AG04450 (cell line): ENCODE measurements at regions of chr4 and their contacts with region 1.

Region 1: GRCh38 chr4:80221161-80221560 is 23.9 kb downstream of the PRDM8 start:
- DNase-seq: no peak
- H3K4me3 ChIP-seq: no peak overlapping the region
- H3K27ac ChIP-seq: no peak overlapping the region
- H3K27me3 ChIP-seq: no peaks in the 10 kb centered on the region
- CTCF ChIP-seq: peak; percentile 56

Region 2: GRCh38 chr4:78951862-78952472 is 1269.2 kb before region 1 on chr4:
- CTCF ChIA-PET with region 1: interaction called, 18 read pairs
- POLR2A ChIA-PET with region 1: no interaction called
- DNase-seq: no peak
- H3K4me3 ChIP-seq: no peak overlapping the region
- H3K27ac ChIP-seq: no peak overlapping the region
- H3K27me3 ChIP-seq: no peaks in the 10 kb centered on the region
- CTCF ChIP-seq: peak; percentile 78

Region 3: DNA sequence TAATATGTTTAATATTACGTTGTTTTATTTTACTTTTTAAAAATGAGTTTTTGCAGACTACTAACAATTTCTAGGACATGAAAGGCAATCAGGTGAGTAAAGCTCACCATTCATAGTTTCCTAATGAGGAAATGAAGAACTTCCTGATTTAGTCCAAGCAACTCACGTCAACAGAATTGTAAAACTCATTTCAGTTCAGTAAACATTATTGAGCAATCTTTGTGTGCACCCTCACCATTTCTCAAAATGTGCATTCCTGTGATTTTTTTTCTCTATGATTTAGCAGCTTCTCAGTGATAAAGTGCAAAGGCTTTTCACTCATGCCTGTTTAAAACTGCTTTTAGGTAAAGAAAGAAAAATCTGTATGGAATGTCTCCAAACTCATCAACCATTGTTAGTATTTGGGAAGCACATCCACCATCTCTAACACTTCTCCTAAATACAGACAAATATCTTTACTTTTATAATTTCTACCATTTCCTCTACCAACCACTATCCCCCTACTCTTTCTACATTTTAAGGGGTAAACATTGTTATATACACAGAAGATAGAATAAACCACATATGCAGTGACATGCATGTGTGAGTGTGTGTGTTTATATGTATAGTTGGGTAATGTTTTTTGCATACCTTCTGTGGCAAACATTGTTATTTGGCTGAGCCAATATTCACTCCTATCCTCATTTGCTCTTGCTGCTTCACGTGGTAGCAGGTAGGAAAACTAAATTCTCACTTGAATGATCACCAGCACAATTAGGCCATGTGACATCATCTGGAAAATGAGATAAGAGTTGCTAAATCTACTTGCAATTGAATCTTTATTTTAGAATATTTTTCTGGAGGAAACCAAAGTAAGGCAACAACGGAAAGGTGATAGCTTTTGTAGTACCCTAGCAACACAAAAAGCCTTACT is 78.5 kb before region 1 on chr4:
- CTCF ChIA-PET with region 1: no interaction called
- POLR2A ChIA-PET with region 1: no interaction called
- DNase-seq: no peak
- H3K4me3 ChIP-seq: no peak overlapping the region
- H3K27ac ChIP-seq: no peak overlapping the region
- H3K27me3 ChIP-seq: no peaks in the 10 kb centered on the region
- CTCF ChIP-seq: no peak

Region 4: DNA sequence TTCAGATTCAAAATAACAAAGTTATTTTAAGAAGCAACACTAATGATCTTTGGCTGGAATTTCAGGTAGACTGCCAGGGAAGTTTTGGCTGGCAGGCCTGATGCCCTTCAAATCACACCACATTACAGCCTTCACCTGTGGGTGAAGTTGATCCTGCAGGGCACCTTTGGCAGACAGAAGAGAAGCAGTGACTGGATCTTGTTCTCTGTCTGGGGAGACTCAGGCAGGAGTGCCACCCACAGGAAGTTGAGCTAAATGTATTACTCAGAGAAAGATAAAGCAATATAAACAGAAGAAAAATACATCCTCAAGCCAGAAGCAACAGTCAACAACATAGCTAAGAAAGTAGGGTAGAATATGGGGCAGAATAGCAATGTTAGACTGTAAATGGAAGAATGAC is 101.6 kb after region 1 on chr4:
- CTCF ChIA-PET with region 1: interaction called, 69 read pairs
- POLR2A ChIA-PET with region 1: no interaction called
- DNase-seq: no peak
- H3K4me3 ChIP-seq: no peak overlapping the region
- H3K27ac ChIP-seq: no peak overlapping the region
- H3K27me3 ChIP-seq: no peaks in the 10 kb centered on the region
- CTCF ChIP-seq: peak; percentile 47

Region 5: GRCh38 chr4:80335554-80336358 is 114.6 kb after region 1 on chr4 and contains the start of gene CFAP299:
- CTCF ChIA-PET with region 1: interaction called, 59 read pairs
- POLR2A ChIA-PET with region 1: no interaction called
- DNase-seq: peak; percentile 75
- H3K4me3 ChIP-seq: peak within 1 kb of the TSS; percentile 82
- H3K27ac ChIP-seq: no peak within 1 kb of the TSS
- H3K27me3 ChIP-seq: no peaks in the 10 kb centered on the region
- CTCF ChIP-seq: peak; percentile 66
- polyA plus RNA-seq, gene CFAP299: 1.4 and 1.9 TPM in 2 replicates